SK-N-SH (cell line): ENCODE measurements at regions of chr5 and their contacts with region 1.

Region 1: GRCh38 chr5:116068028-116068632 is 16.7 kb upstream of the COMMD10 start:
- DNase-seq: peak; percentile 32
- H3K4me3 ChIP-seq: no peak overlapping the region; a peak in 1 of 4 replicates
- H3K27ac ChIP-seq: no peak overlapping the region
- H3K4me1 ChIP-seq: no peaks in the 10 kb centered on the region
- H3K27me3 ChIP-seq: no peaks in the 10 kb centered on the region
- CTCF ChIP-seq: peak; percentile 92
- EP300 ChIP-seq: no peak
- RAD21 ChIP-seq: peak; percentile 84

Region 2: GRCh38 chr5:115634343-115635132 is 433.6 kb before region 1 on chr5:
- CTCF ChIA-PET with region 1: interaction called, 36 read pairs
- POLR2A ChIA-PET with region 1: interaction called, 3 read pairs
- DNase-seq: peak; percentile 78
- H3K4me3 ChIP-seq: peak overlapping the region; percentile 7 to 45; a peak in 1 of 4 replicates
- H3K27ac ChIP-seq: no peak overlapping the region
- H3K4me1 ChIP-seq: no peaks in the 10 kb centered on the region; a peak in 1 of 4 replicates
- H3K27me3 ChIP-seq: no peaks in the 10 kb centered on the region
- CTCF ChIP-seq: peak; percentile 93
- EP300 ChIP-seq: no peak
- RAD21 ChIP-seq: peak; percentile 95

Region 3: GRCh38 chr5:115841382-115842088 is 226.6 kb before region 1 on chr5 and contains the starts of genes AP3S1 and ATG12:
- CTCF ChIA-PET with region 1: interaction called, 18 read pairs
- POLR2A ChIA-PET with region 1: no interaction called
- DNase-seq: peak; percentile 93
- H3K4me3 ChIP-seq: peak within 1 kb of the TSS; percentile 87 to 89
- H3K27ac ChIP-seq: peak within 1 kb of the TSS; percentile 95 to 96
- H3K4me1 ChIP-seq: peaks cover 9 to 21% of the 10 kb centered on the region in 2 experiments; a peak in 3 of 4 replicates
- H3K27me3 ChIP-seq: no peaks in the 10 kb centered on the region
- CTCF ChIP-seq: no peak
- EP300 ChIP-seq: no peak
- RAD21 ChIP-seq: no peak
- polyA plus RNA-seq, gene AP3S1: 21.6 and 26.3 TPM in 2 replicates
- polyA plus RNA-seq, gene ATG12: 29.1 and 39.0 TPM in 2 replicates

Region 4: GRCh38 chr5:115962503-115963402 is 105.4 kb before region 1 on chr5:
- CTCF ChIA-PET with region 1: interaction called, 11 read pairs
- POLR2A ChIA-PET with region 1: no interaction called
- DNase-seq: peak; percentile 72
- H3K4me3 ChIP-seq: peak overlapping the region; percentile 36 to 38; a peak in 3 of 4 replicates
- H3K27ac ChIP-seq: no peak overlapping the region
- H3K4me1 ChIP-seq: peaks cover 0 to 23% of the 10 kb centered on the region in 2 experiments; a peak in 2 of 4 replicates
- H3K27me3 ChIP-seq: peaks cover 36% of the 10 kb centered on the region
- CTCF ChIP-seq: no peak
- EP300 ChIP-seq: no peak
- RAD21 ChIP-seq: no peak

Region 5: DNA sequence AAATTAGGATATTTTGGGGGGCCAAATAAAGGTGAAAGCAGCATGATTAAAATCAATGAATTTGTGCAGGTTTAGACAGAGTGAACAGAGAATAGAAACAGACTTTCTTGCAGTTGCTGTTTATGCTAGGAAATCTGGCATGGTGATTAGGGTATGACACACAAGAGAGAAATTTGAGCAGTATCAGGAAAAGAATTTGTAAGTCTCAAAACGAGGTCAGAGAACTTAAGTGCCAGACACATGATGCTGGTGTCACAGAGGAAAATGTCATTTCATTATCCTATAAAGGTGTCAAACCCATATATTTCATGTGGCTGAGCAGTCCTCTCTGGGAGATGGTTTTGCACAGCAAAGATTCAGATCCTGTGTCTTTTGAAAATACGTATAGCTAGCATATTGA is 90.1 kb before region 1 on chr5:
- CTCF ChIA-PET with region 1: no interaction called
- POLR2A ChIA-PET with region 1: no interaction called
- DNase-seq: no peak
- H3K4me3 ChIP-seq: no peak overlapping the region
- H3K27ac ChIP-seq: no peak overlapping the region
- H3K4me1 ChIP-seq: no peaks in the 10 kb centered on the region
- H3K27me3 ChIP-seq: no peaks in the 10 kb centered on the region
- CTCF ChIP-seq: no peak
- EP300 ChIP-seq: no peak
- RAD21 ChIP-seq: no peak

Region 6: DNA sequence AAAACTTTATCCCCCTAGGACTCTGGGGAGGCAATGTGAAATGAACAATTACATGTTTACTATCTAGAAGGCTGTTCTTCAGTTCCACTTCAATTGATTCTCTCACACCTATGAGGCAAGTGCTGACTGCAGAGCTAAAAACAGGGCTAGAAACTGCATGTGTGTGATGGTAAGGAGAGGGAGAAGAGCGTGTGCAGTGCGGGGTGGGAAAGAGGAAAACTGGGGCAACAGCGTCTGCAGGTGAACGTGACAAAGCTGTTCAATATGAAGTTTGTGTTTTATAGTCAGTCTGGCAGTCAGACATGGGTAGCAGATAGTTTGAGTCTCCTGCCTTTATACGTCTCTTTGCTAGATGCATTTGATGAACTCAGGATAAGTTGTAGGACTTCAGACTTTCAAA is 10.1 kb after region 1 on chr5:
- CTCF ChIA-PET with region 1: interaction called, 18 read pairs
- POLR2A ChIA-PET with region 1: no interaction called
- DNase-seq: no peak
- H3K4me3 ChIP-seq: no peak overlapping the region
- H3K27ac ChIP-seq: no peak overlapping the region
- H3K4me1 ChIP-seq: no peaks in the 10 kb centered on the region; a peak in 1 of 4 replicates
- H3K27me3 ChIP-seq: no peaks in the 10 kb centered on the region
- CTCF ChIP-seq: no peak
- EP300 ChIP-seq: no peak
- RAD21 ChIP-seq: no peak